Transverse colon (tissue), 4 donors: ENCODE measurements at regions of chr9 and their contacts with region 1.

Region 1: DNA sequence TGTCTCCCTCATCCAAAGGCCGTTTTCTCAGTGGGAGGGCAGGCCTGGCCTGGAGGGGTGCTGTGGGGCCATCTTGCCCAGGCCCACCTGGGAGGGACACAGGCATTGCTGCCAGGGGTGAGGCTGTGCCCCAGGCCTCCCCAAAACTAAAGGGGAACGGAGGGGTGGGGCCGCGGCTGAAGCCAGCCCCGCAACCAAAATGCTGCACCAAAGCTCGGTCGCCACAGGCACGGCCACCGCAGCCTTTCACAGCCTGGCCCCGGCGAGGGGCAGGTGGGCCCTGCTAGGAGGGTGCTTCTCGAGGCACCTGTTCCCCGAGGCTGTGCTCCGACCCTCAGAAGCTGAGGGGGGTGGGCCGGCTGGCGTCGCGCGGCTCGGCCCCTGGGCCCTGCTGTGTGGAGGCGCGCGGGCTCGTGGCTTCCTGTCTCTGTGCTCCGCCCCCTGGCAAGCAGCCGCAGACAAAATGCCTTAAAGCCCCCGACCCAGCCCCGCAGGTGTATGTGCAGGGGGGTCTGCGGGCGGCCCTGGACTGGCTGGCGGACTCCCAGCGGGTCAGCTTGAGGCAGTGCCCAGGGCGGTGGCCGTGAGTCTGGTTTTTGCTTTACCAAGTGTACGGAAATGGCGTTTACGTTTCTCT is 57.7 kb downstream of the JAK2 start:
- DNase-seq: no peak
- H3K4me3 ChIP-seq: no peak overlapping the region
- H3K27ac ChIP-seq: no peak overlapping the region
- H3K4me1 ChIP-seq: no peaks in the 10 kb centered on the region
- H3K27me3 ChIP-seq: no peaks in the 10 kb centered on the region
- CTCF ChIP-seq: no peak
- EP300 ChIP-seq: no peak
- POLR2A ChIP-seq: no peak

Region 2: DNA sequence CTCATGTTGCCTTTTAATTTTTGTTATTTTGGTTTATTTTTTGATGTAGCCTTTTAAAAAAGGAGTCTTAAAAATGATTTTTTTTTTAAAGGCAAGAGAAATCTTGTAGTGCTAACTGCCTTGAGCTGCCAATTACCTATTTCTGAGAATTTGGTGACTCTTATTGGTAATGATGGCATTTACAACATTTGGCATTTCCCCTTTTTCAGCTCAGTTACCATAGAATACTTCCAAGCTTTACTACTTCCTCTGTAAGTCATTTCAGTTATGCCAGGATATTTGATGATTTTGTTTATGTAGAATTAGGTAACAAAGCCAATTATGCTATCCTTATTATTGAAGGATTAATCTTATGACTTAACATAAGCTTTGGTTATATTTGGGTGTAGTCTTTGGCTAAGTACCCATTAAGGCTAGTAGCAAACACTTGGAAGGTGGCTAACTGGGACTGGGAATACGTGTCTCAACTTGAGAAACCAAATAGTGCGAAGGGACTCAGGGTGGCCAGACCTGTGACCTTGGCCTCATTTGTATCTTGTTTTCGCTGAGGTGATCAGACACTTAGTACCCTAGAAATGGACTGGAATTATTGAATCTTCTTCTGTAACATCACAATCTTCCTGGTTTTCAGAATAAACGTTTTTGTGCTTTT is 335.7 kb before region 1 on chr9:
- in situ Hi-C with region 1: no loop called
- intact Hi-C with region 1: no loop called
- DNase-seq: no peak
- H3K4me3 ChIP-seq: no peak overlapping the region
- H3K27ac ChIP-seq: no peak overlapping the region
- H3K4me1 ChIP-seq: no peaks in the 10 kb centered on the region
- H3K27me3 ChIP-seq: no peaks in the 10 kb centered on the region
- CTCF ChIP-seq: no peak
- EP300 ChIP-seq: no peak
- POLR2A ChIP-seq: no peak

Region 3: GRCh38 chr9:4946937-4947336 is 95.8 kb before region 1 on chr9:
- in situ Hi-C with region 1: no loop called
- intact Hi-C with region 1: no loop called
- DNase-seq: no peak
- H3K4me3 ChIP-seq: no peak overlapping the region
- H3K27ac ChIP-seq: no peak overlapping the region
- H3K4me1 ChIP-seq: peaks cover 0 to 3% (median 0%) of the 10 kb centered on the region in 4 donors
- H3K27me3 ChIP-seq: no peaks in the 10 kb centered on the region
- CTCF ChIP-seq: no peak
- EP300 ChIP-seq: no peak
- POLR2A ChIP-seq: no peak

Region 4: GRCh38 chr9:5493679-5494511 is 451.1 kb after region 1 on chr9:
- in situ Hi-C with region 1: no loop called
- intact Hi-C with region 1: loop called (anchors 5 kb)
- DNase-seq: peak; percentile 29
- H3K4me3 ChIP-seq: no peak overlapping the region
- H3K27ac ChIP-seq: peak overlapping the region; percentile 11 to 64 (median 52)
- H3K4me1 ChIP-seq: no peaks in the 10 kb centered on the region
- H3K27me3 ChIP-seq: no peaks in the 10 kb centered on the region
- CTCF ChIP-seq: no peak
- EP300 ChIP-seq: no peak
- POLR2A ChIP-seq: no peak